HepG2 (cell line): ENCODE measurements at regions of chr5 and their contacts with region 1.

Region 1: GRCh38 chr5:82387001-82387818 is 109.1 kb upstream of the RPS23 start:
- DNase-seq: peak; percentile 100
- ATAC-seq: peak; percentile 93
- H3K4me3 ChIP-seq: peak overlapping the region in 1 of 3 experiments; percentile 9; a peak in 1 of 6 replicates
- H3K27ac ChIP-seq: peak overlapping the region; percentile 72
- H3K4me1 ChIP-seq: peaks cover 68% of the 10 kb centered on the region
- H3K27me3 ChIP-seq: no peaks in the 10 kb centered on the region
- CTCF ChIP-seq: no peak
- EP300 ChIP-seq: peak; percentile 96 to 98
- POLR2A ChIP-seq: no peak
- RAD21 ChIP-seq: 0 out of 2 replicates have a peak, but pooled peaks have one; percentile 16

Region 2: GRCh38 chr5:82356808-82357671 is 30.2 kb before region 1 on chr5:
- CTCF ChIA-PET with region 1: no interaction called
- POLR2A ChIA-PET with region 1: interaction called, 27 read pairs
- in situ Hi-C with region 1: no loop called
- intact Hi-C with region 1: loop called (anchors 2 kb)
- DNase-seq: peak; percentile 93
- ATAC-seq: peak; percentile 93
- H3K4me3 ChIP-seq: peak overlapping the region in 1 of 3 experiments; percentile 57; a peak in 2 of 6 replicates
- H3K27ac ChIP-seq: peak overlapping the region; percentile 60
- H3K4me1 ChIP-seq: peaks cover 64% of the 10 kb centered on the region
- H3K27me3 ChIP-seq: no peaks in the 10 kb centered on the region
- CTCF ChIP-seq: no peak
- EP300 ChIP-seq: peak in 1 of 2 experiments; percentile 80; a peak in 2 of 4 replicates
- POLR2A ChIP-seq: peak in 1 of 2 experiments; percentile 31; a peak in 1 of 4 replicates
- RAD21 ChIP-seq: no peak

Region 3: GRCh38 chr5:82375531-82376244 is 11.5 kb before region 1 on chr5:
- CTCF ChIA-PET with region 1: no interaction called
- POLR2A ChIA-PET with region 1: interaction called, 24 read pairs
- in situ Hi-C with region 1: no loop called
- intact Hi-C with region 1: no loop called
- DNase-seq: peak; percentile 47
- ATAC-seq: peak; percentile 69
- H3K4me3 ChIP-seq: no peak overlapping the region
- H3K27ac ChIP-seq: no peak overlapping the region
- H3K4me1 ChIP-seq: peaks cover 17% of the 10 kb centered on the region
- H3K27me3 ChIP-seq: no peaks in the 10 kb centered on the region
- CTCF ChIP-seq: no peak
- EP300 ChIP-seq: peak in 1 of 2 experiments; percentile 58; a peak in 2 of 4 replicates
- POLR2A ChIP-seq: no peak
- RAD21 ChIP-seq: no peak

Region 4: GRCh38 chr5:82414041-82414388 is 26.8 kb after region 1 on chr5:
- CTCF ChIA-PET with region 1: no interaction called
- POLR2A ChIA-PET with region 1: no interaction called
- in situ Hi-C with region 1: no loop called
- intact Hi-C with region 1: no loop called
- DNase-seq: no peak
- ATAC-seq: no peak
- H3K4me3 ChIP-seq: no peak overlapping the region
- H3K27ac ChIP-seq: no peak overlapping the region
- H3K4me1 ChIP-seq: peaks cover 22% of the 10 kb centered on the region
- H3K27me3 ChIP-seq: no peaks in the 10 kb centered on the region
- CTCF ChIP-seq: no peak
- EP300 ChIP-seq: no peak
- POLR2A ChIP-seq: no peak
- RAD21 ChIP-seq: no peak

Region 5: GRCh38 chr5:82522897-82523296 is 135.7 kb after region 1 on chr5:
- CTCF ChIA-PET with region 1: no interaction called
- POLR2A ChIA-PET with region 1: interaction called, 4 read pairs
- in situ Hi-C with region 1: no loop called
- intact Hi-C with region 1: loop called (anchors 1 kb)
- DNase-seq: peak; percentile 6
- ATAC-seq: no peak
- H3K4me3 ChIP-seq: no peak overlapping the region
- H3K27ac ChIP-seq: no peak overlapping the region
- H3K4me1 ChIP-seq: peaks cover 31% of the 10 kb centered on the region
- H3K27me3 ChIP-seq: no peaks in the 10 kb centered on the region
- CTCF ChIP-seq: no peak
- EP300 ChIP-seq: no peak
- POLR2A ChIP-seq: no peak
- RAD21 ChIP-seq: no peak

Region 6: DNA sequence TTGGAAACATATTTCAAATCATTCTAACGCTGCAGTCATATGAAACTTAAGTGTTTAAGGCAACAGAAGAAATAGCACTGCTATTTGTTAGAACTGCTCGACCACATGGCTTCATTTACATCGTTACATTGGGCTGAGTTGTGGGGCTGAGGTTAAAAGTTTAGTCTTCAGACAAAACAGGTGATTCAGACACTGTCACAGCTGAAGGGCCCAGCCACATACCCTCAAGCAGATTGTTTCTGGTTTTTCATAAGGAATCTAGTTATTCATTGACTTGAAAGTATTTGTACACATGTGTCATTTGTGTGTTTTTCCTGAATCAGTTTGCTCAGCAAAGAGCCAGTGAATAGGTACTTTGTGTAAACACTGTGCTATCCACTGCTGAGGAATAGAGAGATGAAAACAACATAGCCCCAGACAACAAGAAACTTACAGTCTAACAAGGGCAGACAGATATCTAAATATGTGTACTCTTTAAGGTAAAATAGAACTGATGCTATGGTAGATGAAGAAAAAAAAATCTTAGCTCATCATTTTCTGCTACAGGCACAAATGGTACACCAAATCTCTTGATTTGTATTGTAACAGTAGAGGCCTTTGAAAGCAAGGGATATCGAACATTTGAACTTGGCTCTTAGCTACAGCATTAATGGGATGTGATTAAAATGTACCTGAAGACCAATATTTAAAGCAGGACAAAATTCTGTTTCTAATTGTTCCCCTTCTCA is 248.5 kb after region 1 on chr5:
- CTCF ChIA-PET with region 1: no interaction called
- POLR2A ChIA-PET with region 1: interaction called, 26 read pairs
- in situ Hi-C with region 1: no loop called
- intact Hi-C with region 1: loop called (anchors 1 kb)
- DNase-seq: peak; percentile 98
- ATAC-seq: peak; percentile 99
- H3K4me3 ChIP-seq: no peak overlapping the region; a peak in 1 of 6 replicates
- H3K27ac ChIP-seq: peak overlapping the region; percentile 56
- H3K4me1 ChIP-seq: peaks cover 31% of the 10 kb centered on the region
- H3K27me3 ChIP-seq: no peaks in the 10 kb centered on the region
- CTCF ChIP-seq: no peak
- EP300 ChIP-seq: peak in 1 of 2 experiments; percentile 97; a peak in 2 of 4 replicates
- POLR2A ChIP-seq: no peak
- RAD21 ChIP-seq: peak; percentile 15; the same call in 1 of the 2 replicates

Region 7: DNA sequence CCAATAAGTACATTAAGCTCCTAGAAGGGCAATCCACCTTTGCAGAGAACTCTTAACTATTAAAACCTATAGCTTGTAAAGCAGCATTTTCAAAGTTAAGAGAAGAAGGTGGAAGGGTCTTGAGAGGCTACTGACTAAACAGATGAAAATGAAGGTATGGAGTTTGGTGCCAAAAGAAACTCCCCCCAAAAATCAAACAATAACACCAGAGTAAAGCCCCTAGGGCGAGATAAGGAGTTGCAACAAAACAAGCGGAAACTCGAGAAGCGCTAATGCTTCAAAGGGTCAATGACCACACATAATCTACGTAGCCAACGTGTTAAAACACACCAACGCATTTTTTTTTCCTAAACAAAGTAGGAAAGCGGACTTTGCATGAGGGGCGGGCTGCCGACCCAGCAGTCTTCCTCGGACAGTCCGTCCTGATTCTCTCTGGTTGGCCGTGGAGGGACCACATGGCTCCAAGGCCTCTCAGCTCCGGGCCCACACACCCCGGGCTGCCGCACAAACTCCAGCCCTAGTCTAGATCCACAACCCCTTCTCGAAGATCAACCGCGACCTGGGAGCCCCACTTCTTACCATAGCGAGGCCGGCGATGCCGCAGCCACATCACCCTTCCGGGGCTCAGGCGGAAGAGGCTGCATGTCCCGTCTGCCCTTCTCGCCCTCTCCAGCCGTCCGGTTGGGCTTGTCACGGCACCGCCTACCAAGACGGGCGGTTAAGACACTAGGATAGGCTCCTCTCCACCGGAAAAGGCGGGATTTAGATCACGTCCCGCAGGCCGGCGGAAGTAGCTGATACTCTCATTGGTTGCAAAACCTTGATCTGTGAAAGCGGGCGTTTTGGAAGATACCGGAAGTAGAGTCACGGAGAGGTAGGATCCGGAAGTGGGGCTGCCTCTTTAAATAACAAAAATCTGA is 689.8 kb after region 1 on chr5 and contains the starts of genes TMEM167A and XRCC4:
- CTCF ChIA-PET with region 1: no interaction called
- POLR2A ChIA-PET with region 1: interaction called, 3 read pairs
- in situ Hi-C with region 1: no loop called
- intact Hi-C with region 1: loop called (anchors 1 kb)
- DNase-seq: peak; percentile 99
- ATAC-seq: peak; percentile 99
- H3K4me3 ChIP-seq: peak within 1 kb of the TSS; percentile 83 to 94 (median 90)
- H3K27ac ChIP-seq: peak within 1 kb of the TSS; percentile 94
- H3K4me1 ChIP-seq: peaks cover 49% of the 10 kb centered on the region
- H3K27me3 ChIP-seq: no peaks in the 10 kb centered on the region; a peak in 1 of 5 replicates
- CTCF ChIP-seq: no peak
- EP300 ChIP-seq: no peak
- POLR2A ChIP-seq: peak; percentile 92 to 98
- RAD21 ChIP-seq: peak; percentile 41; the same call in 1 of the 2 replicates
- total RNA-seq, gene TMEM167A: 78.7 and 122 TPM in 2 replicates
- total RNA-seq, gene XRCC4: 12.6 and 21.8 TPM in 2 replicates

Region 8: GRCh38 chr5:83964271-83964670 is 1577.1 kb after region 1 on chr5:
- CTCF ChIA-PET with region 1: no interaction called
- POLR2A ChIA-PET with region 1: no interaction called
- in situ Hi-C with region 1: no loop called
- intact Hi-C with region 1: no loop called
- DNase-seq: no peak
- ATAC-seq: no peak
- H3K4me3 ChIP-seq: no peak overlapping the region
- H3K27ac ChIP-seq: no peak overlapping the region
- H3K4me1 ChIP-seq: no peaks in the 10 kb centered on the region
- H3K27me3 ChIP-seq: no peaks in the 10 kb centered on the region
- CTCF ChIP-seq: no peak
- EP300 ChIP-seq: no peak
- POLR2A ChIP-seq: no peak
- RAD21 ChIP-seq: no peak